ENCODE measurements at regions of chr15 and their contacts with region 1.

Region 1: DNA sequence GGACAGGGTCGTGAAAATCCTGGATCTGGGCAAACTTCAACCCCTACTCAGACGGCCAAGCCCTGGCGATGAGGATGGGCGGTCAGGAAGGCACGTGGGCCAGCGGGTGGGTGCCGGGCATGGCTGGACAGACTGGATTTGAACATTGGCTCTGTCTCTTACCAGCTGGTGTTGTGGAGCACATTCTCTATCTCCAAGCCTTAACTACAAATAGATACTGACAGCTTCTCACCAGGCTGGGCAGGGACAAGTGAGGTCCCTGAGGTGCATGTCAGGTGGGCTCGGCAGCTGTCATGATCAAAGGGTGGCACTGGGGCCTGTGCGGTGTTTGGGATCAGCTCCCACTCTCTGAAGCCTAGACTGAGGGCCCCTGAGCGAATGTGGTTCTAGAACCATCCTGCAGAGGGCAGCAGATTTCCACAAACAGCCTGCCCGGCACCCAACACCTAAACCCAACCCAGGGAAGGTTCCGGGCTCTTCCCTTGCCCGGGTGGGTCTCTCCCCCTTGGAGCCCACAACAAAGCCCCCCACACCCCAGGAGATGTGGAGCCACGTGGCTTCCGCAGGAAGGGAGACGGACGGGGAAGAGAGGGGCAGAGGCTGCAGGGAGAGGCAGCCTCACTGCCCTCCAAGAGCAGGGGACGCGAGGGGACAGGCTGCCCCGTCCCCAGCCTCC is 58.4 kb downstream of the RGMA start:
- ATAC-seq: peak; percentile 51 to 86 (median 80)
- H3K4me3 ChIP-seq: no peak overlapping the region
- H3K27ac ChIP-seq: peak overlapping the region in 1 of 2 donors; percentile 37
- H3K4me1 ChIP-seq: peaks cover 16 to 32% of the 10 kb centered on the region in 2 donors

Region 2: DNA sequence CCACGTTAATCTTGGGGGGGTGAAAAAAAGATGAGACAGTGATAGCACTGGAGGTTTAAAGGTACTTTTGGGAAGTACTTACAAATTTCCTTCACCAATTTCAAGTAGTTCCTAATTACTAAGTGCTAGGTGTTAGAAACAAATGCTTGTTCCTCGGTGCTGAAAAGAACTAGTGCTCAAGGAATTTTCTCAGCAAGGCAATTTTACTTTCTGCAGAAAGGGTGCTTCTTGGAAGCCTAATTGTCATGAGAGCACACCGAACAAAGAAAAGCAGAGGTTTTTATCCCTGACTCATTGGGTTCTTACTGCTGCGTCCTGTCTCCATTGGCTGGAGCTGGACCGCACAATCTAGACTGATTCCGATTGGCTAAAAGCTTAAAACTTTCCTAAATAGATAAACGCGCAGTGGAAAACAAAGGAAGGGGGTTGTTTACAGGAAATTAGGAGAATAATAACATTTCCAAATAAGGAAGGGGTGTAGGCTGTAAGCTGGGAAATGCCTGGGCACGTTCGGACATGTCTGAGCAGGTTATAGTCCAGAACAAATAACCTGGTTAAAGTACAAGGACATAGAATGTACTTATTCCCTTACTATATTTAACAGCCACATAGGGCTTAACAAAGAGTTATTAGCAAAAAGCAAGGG is 80.8 kb before region 1 on chr15:
- in situ Hi-C with region 1: no loop called
- ATAC-seq: peak in 1 of 8 experiments; percentile 18
- H3K4me3 ChIP-seq: no peak overlapping the region
- H3K27ac ChIP-seq: no peak overlapping the region
- H3K4me1 ChIP-seq: no peaks in the 10 kb centered on the region

Region 3: GRCh38 chr15:93826790-93827189 is 796.2 kb after region 1 on chr15:
- in situ Hi-C with region 1: loop called in 1 of 9 experiments (anchors 25 kb)
- ATAC-seq: no peak
- H3K4me3 ChIP-seq: no peak overlapping the region
- H3K27ac ChIP-seq: peak overlapping the region in 1 of 2 donors; percentile 30
- H3K4me1 ChIP-seq: peaks cover 36 to 50% of the 10 kb centered on the region in 2 donors

Region 4: DNA sequence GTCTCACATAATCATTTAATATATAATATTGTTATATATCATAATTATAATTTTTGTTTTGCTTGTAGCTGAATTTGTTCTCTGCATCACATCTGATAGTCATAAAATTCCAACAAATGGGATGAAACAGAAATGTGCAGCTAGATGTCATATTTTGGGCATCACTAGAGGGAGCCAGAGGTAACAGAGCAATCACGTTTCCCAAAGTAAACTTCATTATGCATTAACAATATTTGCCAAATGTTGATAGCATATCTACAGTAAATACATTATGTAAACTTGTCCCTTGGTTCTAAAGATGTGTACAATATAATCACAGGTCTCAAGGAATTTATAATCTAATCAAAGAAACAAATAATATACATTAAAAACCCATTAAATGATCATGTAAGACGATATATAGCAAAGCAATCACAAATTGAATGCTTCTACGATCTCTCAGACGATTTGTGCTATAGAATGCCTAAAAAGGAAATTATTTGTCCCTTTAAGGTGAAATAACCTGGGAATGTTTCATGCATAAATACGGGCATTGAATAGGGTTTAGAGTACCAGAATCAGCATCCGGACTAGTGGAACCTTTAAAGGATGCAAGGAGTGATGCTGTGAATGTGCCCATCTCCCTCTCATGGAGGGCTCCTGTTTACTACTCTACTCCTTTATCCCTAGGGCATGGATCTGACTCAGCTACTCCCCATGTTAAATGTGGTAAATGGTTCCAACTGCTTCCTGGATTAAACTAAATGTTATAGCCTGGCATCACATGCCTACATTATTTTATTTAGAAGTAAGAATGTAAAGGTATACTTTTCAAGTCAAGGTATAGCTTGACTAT is 966.7 kb after region 1 on chr15:
- in situ Hi-C with region 1: loop called in 1 of 9 experiments (anchors 25 kb)
- ATAC-seq: no peak
- H3K4me3 ChIP-seq: no peak overlapping the region
- H3K27ac ChIP-seq: no peak overlapping the region
- H3K4me1 ChIP-seq: peaks cover 7 to 27% of the 10 kb centered on the region in 2 donors

Region 5: DNA sequence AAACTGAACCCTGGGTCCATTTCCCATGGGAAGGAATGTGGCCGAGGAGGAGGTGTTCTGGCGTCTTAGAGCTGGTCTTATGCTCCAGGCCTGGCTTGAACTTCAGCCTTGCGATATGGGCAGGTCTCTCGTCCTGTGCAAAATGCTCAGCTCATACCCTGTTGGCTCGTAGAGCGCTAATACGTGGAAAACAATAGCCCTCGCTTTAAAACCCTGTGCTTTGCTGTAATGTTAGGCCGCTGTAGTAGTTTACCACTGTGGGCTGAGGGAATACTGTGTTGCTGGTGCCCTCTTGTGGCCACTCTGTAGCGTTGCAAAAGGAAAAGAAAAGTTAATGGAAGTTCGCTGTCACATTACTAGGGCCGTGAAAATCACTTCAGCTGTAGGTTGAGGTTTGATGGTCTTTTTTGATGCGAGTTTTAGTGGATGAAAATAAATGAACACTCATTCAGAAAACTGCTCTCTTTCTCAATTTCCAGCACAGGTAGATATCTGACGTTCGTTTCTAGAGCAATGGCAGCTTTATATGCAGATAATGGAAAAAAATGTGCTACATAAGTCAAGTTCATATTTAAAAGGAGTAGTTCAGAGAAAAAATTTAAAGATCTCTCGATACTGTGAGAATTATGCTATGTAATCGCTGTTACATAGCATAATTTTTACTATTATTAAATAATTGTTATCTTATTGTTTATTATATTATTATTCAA is 1293.7 kb after region 1 on chr15:
- in situ Hi-C with region 1: loop called in 1 of 9 experiments (anchors 25 kb)
- ATAC-seq: peak; percentile 69 to 91 (median 82)
- H3K4me3 ChIP-seq: no peak overlapping the region
- H3K27ac ChIP-seq: no peak overlapping the region
- H3K4me1 ChIP-seq: no peaks in the 10 kb centered on the region